Colonic mucosa (tissue), 4 donors: ENCODE measurements at regions of chr4 and their contacts with region 1.

Region 1: GRCh38 chr4:139083956-139084803 is 68.6 kb downstream of the NOCT start:
- DNase-seq: peak; percentile 86
- H3K4me3 ChIP-seq: peak overlapping the region; percentile 89
- H3K27ac ChIP-seq: peak overlapping the region; percentile 98
- H3K4me1 ChIP-seq: peaks cover 11% of the 10 kb centered on the region
- H3K27me3 ChIP-seq: no peaks in the 10 kb centered on the region
- CTCF ChIP-seq: peak; percentile 16

Region 2: GRCh38 chr4:139177868-139178611 is 93.9 kb after region 1 on chr4:
- intact Hi-C with region 1: loop called (anchors 5 kb)
- DNase-seq: peak; percentile 96
- H3K4me3 ChIP-seq: peak overlapping the region; percentile 75
- H3K27ac ChIP-seq: peak overlapping the region; percentile 99
- H3K4me1 ChIP-seq: no peaks in the 10 kb centered on the region
- H3K27me3 ChIP-seq: no peaks in the 10 kb centered on the region
- CTCF ChIP-seq: no peak

Region 3: GRCh38 chr4:139208404-139208945 is 124.3 kb after region 1 on chr4:
- intact Hi-C with region 1: no loop called
- DNase-seq: no peak
- H3K4me3 ChIP-seq: no peak overlapping the region
- H3K27ac ChIP-seq: no peak overlapping the region
- H3K4me1 ChIP-seq: no peaks in the 10 kb centered on the region
- H3K27me3 ChIP-seq: no peaks in the 10 kb centered on the region
- CTCF ChIP-seq: no peak

Region 4: DNA sequence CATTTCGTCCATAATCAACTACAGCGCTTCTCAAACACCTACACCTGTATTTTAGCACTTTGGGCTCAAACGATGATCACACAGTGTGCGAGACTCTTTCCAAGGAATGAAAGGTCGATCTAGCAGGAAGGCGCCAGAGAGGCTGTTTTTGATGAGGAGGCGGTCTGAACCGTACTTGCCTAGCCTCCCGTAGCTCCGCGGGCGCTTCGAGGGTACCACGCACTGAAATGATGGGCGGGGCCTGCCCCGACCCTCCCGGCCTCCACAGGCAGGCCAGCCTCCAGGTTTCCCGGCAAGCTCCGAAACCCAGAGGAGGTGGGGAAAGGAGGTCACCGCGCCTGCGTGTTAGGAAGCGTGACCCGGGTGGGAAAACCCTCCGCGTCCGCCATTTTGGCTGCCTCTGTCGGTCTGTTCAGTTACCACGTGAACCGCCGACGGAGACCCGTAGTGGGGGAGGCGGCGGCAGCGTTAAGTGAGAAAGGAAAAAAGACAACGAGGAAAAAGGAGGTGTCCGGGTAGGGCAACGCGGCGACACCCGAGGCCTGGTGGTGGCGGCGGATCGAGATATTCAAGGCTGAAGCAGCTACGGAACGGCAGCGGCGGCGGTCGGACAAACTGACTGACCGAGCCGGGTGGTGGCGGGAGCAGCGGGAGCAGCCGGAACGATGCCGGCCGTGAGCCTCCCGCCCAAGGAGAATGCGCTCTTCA is 217.1 kb after region 1 on chr4 and contains the start of gene NAA15:
- intact Hi-C with region 1: loop called (anchors 5 kb)
- DNase-seq: peak; percentile 98
- H3K4me3 ChIP-seq: peak within 1 kb of the TSS; percentile 87
- H3K27ac ChIP-seq: peak within 1 kb of the TSS; percentile 94
- H3K4me1 ChIP-seq: no peaks in the 10 kb centered on the region
- H3K27me3 ChIP-seq: no peaks in the 10 kb centered on the region
- CTCF ChIP-seq: no peak
- total RNA-seq, gene NAA15: 32.4 to 55.5 TPM